ENCODE measurements at regions of chr9 and their contacts with region 1.

Region 1: DNA sequence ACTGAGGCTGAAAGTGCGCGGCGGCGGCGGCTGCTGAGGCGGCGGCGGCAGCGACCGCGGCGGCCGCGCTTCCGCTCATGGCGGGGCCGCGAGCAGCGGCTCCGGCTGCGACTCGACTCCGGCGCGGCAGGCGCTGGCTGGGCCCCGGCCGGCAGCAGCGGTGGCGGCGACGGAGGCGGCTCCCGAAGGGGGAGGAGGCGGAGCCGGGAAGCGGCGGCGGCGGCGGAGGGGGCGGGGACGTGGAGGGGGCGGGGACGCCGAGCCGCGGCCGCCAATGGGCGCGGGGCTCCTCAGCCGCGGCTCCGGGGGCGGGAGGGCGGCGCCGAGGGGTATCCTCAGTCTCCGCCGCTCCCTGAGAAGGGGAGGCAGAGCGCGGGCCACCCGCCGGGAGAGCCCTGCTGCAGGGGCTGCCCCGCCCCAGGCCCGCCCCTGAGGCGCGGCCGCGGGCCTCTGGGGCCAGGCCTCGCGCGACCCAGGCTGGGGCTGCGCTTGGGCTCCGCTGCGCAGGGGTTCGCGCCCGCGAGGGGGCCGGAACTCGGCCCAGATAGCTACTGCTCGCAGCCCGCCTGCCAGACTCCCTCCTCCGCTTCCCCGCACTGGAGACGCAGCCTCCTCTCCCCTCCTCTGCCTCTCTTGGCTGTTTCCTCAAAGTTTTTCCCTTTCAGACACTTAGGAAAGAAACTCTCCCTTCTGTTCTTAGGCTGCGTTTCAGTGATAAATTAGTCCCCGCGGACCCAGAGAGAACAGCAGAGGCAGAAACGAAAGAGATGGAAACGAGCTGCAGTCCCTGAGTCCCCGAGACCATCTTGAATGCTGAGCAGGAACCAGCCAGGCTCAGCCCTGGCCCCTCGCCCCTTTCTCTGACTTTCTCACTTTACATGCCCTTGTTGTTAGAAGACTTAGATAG is 85.0 kb upstream of the MELK start:
- DNase-seq: peak; percentile 66 to 93 (median 84)
- H3K4me3 ChIP-seq: peak overlapping the region; percentile 59 to 98 (median 86)
- H3K27ac ChIP-seq: peak overlapping the region; percentile 19 to 96 (median 91)
- H3K27me3 ChIP-seq: no peaks in the 10 kb centered on the region
- CTCF ChIP-seq: peak in 24 of 56 donors; percentile 9 to 51 (median 27)

Region 2: DNA sequence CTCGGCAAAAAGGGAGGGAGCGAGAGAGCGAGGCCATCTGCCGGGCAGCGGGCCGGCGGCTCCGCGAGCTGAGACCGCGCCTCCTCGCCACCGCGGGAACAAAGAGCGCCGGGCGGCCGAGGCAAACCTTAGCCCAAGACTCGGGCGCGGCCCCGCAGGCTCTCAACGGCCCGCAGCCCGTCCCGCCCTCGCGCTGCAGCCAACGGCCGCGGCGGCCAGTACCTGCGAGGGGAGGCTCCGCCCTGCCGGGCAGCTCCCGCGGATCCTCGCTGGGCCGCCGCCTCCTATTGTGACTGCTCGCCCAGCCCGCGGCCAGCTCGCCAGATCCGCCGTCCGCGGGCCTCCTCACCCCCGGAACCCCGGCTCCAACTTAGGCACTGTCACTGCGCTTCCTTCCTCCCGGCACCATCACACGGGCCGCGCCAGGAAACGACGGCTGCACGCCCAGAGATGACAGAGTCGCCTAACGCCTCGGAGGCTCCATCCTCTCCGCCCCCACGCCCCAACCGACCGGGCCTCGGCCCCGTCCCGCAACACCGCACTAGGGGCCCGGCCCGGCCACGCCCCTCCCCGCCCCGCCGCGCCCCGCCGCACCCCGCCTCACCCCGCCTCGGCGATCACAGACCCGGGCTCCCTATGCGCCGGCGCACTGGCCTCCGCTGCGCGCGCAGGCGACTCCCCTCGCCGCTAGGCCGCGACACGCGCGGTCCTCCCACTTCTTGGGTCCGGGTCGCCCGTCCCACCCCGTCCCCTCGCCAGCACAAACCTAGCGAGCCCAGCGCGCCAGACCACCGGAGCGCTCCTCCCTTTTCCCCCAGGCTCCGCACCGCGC is 87.2 kb before region 1 on chr9:
- intact Hi-C with region 1: loop called in 1 of 2 experiments (anchors 2 kb)
- DNase-seq: peak; percentile 72 to 90 (median 84)
- H3K4me3 ChIP-seq: peak overlapping the region; percentile 61 to 98 (median 86)
- H3K27ac ChIP-seq: peak overlapping the region; percentile 84 to 99 (median 95)
- H3K27me3 ChIP-seq: no peaks in the 10 kb centered on the region
- CTCF ChIP-seq: peak in 28 of 56 donors; percentile 3 to 41 (median 18)

Region 3: DNA sequence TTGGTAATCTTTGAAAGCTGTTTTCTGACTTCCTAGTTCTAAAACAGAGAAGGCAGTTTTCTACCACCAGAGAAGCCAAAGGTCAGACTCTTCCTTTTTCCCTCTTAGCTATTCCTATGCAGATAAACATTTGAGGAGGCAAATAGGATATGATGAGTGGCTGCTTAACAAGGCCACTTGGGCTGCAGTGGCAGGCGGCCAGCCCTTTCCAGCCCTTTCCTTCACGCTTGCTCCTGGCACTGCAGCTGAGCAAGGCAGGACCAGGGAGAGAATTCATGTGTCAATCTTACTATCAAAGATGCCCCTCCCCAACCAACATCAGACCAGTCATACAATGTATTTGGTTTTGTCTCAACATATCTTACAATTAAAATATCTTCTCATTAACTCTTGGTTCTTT is 50.8 kb before region 1 on chr9:
- intact Hi-C with region 1: no loop called
- DNase-seq: peak in 9 of 10 donors; percentile 21 to 67 (median 37)
- H3K4me3 ChIP-seq: no peak overlapping the region
- H3K27ac ChIP-seq: peak overlapping the region in 8 of 59 donors; percentile 0 to 40 (median 26)
- H3K27me3 ChIP-seq: no peaks in the 10 kb centered on the region
- CTCF ChIP-seq: no peak

Region 4: GRCh38 chr9:36450110-36450732 is 37.5 kb before region 1 on chr9:
- intact Hi-C with region 1: loop called in 1 of 2 experiments (anchors 5 kb)
- DNase-seq: peak in 1 of 10 donors; percentile 37
- H3K4me3 ChIP-seq: no peak overlapping the region
- H3K27ac ChIP-seq: no peak overlapping the region
- H3K27me3 ChIP-seq: no peaks in the 10 kb centered on the region
- CTCF ChIP-seq: peak; percentile 65 to 96 (median 82)

Region 5: GRCh38 chr9:36566813-36567221 is 79.1 kb after region 1 on chr9:
- intact Hi-C with region 1: loop called in 1 of 2 experiments (anchors 5 kb)
- DNase-seq: peak; percentile 58 to 93 (median 85)
- H3K4me3 ChIP-seq: peak overlapping the region in 2 of 59 donors; percentile 3 to 16
- H3K27ac ChIP-seq: peak overlapping the region in 57 of 59 donors; percentile 32 to 90 (median 78)
- H3K27me3 ChIP-seq: no peaks in the 10 kb centered on the region
- CTCF ChIP-seq: peak in 4 of 56 donors; percentile 7 to 24 (median 12)

Region 6: DNA sequence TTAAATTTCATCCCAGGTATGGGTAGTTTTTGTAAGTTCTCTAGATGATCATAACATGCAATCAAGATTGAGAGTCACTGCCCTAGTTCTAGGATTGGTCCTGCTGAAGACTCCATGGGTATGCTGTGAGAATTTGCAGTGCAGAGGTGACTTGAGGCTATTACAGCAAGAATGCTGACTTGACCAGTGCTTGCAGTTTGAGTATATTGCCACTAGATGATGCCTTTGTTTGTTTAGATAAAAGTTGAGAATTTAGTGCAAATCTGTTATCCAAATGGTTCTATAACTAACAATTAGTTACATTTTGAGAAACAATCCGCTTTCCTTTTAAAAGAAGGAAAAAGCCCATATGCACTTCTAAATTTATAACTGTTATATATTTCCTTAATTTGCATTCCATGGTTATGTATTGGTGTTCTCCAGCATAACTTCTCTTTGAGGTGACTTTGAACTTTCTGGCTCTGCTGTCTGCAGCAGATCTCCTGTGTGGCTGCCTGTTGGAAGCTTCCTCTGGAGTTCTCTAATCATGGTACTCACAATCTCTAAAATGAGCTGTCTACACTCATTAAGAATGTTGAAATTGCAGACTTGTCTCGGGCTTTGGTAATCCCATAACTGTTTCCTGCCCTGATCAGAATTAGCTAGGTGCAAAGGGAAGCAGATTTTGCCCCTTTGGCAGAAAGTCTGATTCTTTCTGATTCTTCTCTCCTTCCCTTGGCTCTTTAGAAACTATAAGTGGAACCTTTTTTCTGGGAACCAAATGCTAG is 109.9 kb after region 1 on chr9:
- intact Hi-C with region 1: no loop called
- DNase-seq: no peak
- H3K4me3 ChIP-seq: no peak overlapping the region
- H3K27ac ChIP-seq: no peak overlapping the region
- H3K27me3 ChIP-seq: no peaks in the 10 kb centered on the region
- CTCF ChIP-seq: peak in 44 of 56 donors; percentile 10 to 54 (median 35)